ENCODE measurements at regions of chr2 and their contacts with region 1.

Region 1: GRCh38 chr2:83782122-83782521 is 677.0 kb downstream of the SUCLG1 start:
- DNase-seq: no peak
- H3K4me3 Mint-ChIP-seq: no peak overlapping the region
- H3K27ac Mint-ChIP-seq: no peak overlapping the region
- H3K4me1 Mint-ChIP-seq: no peaks in the 10 kb centered on the region
- H3K27me3 Mint-ChIP-seq: no peaks in the 10 kb centered on the region

Region 2: DNA sequence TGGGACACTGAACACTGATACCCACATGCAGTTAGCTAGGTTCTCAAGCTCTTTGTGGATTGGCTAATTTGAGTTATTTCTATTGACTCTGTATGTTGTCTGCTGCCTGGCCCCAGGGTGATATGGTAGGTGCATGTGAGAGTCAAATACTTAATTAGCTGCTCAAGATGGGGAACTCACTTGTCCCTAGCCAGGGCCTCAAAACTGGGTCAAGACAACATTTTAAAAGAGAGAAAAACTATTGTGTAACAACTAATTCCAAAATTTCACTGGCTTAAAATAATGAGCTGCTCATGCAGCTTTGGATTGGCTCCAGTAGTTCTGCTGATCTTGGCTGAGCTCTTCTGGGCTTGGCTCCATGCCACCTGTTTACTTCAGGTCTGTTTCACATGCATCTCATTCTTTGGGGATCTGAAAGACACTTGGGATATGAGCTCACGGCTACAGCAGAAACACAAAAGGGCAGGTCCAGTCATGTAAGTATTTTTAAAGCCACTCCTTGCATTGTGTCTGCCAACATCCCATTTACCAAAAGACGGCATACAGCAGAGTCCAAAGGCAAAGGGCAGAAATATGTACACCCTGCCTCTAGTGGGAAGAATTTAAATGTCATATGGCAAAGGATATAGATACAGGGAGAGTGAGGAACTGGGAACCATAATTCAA is 39.9 kb before region 1 on chr2:
- intact Hi-C with region 1: no loop called
- DNase-seq: no peak
- H3K4me3 Mint-ChIP-seq: no peak overlapping the region
- H3K27ac Mint-ChIP-seq: no peak overlapping the region
- H3K4me1 Mint-ChIP-seq: no peaks in the 10 kb centered on the region
- H3K27me3 Mint-ChIP-seq: no peaks in the 10 kb centered on the region

Region 3: DNA sequence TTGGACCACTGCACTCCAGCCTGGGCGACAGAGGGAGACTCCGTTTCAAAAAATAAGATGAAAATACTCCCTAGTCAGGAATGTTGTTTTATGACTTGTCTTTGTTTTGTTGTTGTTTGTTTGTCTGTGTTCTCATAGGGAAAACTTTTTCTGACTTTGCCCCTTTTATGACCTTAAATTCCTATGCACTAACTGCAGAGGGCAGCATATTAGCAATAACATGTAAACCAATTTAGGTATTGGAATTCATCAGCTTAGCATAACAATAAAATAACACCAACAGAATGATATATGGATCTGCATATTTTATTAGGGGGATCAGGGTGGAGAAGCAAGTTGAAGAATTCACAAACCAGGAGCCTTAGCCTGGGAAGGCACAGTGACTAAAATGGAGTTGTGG is 45.5 kb after region 1 on chr2:
- intact Hi-C with region 1: loop called (anchors 2 kb)
- DNase-seq: no peak
- H3K4me3 Mint-ChIP-seq: no peak overlapping the region
- H3K27ac Mint-ChIP-seq: no peak overlapping the region
- H3K4me1 Mint-ChIP-seq: no peaks in the 10 kb centered on the region
- H3K27me3 Mint-ChIP-seq: no peaks in the 10 kb centered on the region

Region 4: DNA sequence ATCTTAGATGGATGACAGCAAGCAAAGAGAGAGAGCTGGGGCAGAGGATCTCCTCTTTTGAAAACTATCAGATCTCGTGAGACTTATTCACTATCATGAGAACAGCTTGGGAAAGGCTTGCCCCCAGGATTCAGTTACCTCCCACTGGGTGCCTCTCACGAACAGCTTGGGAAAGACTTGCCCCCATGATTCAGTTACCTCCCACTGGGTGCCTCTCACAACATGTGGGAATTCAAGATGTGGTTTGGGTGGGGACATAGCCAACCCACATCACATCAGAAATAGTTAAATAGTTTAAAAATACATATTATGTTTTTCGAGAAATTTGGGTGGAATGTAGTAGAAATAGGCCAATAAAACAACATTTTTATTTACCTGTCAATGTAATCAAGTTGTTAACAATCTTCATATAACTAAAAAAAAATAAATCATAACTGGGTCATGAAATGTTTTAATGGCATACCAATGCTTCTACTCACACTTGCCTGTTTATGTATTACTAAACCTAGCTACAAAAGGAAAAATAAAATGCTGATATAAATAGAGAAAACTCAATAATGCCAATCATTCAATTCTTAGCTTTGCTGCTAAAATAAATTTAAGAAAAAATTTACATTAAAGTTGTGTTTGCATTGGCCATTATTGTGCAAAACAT is 68.1 kb after region 1 on chr2:
- intact Hi-C with region 1: no loop called
- DNase-seq: no peak
- H3K4me3 Mint-ChIP-seq: no peak overlapping the region
- H3K27ac Mint-ChIP-seq: no peak overlapping the region
- H3K4me1 Mint-ChIP-seq: no peaks in the 10 kb centered on the region
- H3K27me3 Mint-ChIP-seq: no peaks in the 10 kb centered on the region

Measured in activated T-helper 1 cell treated with anti-CD3 and anti-CD28 coated beads, Interleukin-12 subunit alpha, Interleukin-12 subunit beta, Interleukin-2, Interleukin-4 antibody, amounts not matched to agents 30 ng/mL and 10 ng/mL and 1 ng/mL, durations not matched to agents 14 hours and 24 hours and 36 hours (primary cell).